GM10248 (cell line): ENCODE measurements at regions of chr17 and their contacts with region 1.

Region 1: GRCh38 chr17:29180034-29180787 is at the start of gene MYO18A:
- DNase-seq: peak; percentile 94
- CTCF ChIP-seq: peak; percentile 89

Region 2: GRCh38 chr17:29155227-29155965 is 24.8 kb before region 1 on chr17:
- CTCF ChIA-PET with region 1: interaction called, 201 read pairs
- POLR2A ChIA-PET with region 1: no interaction called
- DNase-seq: peak; percentile 71
- CTCF ChIP-seq: no peak

Region 3: DNA sequence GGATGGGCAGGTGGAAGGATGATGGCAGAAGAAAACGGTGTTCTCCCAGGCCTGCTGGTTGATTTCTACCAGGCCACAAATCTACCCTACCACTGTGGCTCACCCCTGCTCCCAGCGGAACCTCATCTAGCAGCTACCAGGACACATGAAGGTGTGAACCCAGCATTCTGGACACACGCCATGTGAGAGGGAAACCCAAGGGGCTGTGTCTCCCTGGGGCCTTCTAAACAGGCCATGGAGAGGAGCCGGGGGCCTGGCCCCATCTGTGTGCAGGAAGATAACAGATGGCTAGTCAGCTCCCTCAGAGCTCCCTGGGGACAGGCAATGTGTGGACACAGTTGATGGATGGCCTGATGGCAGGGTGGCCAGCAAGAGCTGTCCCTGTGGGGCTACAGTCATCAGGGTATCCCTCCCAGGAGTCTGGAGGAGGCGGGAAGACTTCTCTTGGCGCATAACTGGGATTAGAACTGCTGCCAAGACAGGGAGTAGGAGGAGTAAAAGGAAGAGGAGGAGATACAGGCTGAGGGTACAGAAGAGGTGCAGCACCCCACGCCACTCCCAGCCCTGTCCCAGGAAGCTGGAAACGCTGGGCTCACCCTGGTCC is 17.4 kb before region 1 on chr17:
- CTCF ChIA-PET with region 1: interaction called, 92 read pairs
- POLR2A ChIA-PET with region 1: no interaction called
- DNase-seq: no peak
- CTCF ChIP-seq: no peak

Region 4: GRCh38 chr17:29195465-29196081 is 15.4 kb after region 1 on chr17:
- CTCF ChIA-PET with region 1: interaction called, 134 read pairs
- POLR2A ChIA-PET with region 1: no interaction called
- DNase-seq: peak; percentile 64
- CTCF ChIP-seq: no peak

Region 5: DNA sequence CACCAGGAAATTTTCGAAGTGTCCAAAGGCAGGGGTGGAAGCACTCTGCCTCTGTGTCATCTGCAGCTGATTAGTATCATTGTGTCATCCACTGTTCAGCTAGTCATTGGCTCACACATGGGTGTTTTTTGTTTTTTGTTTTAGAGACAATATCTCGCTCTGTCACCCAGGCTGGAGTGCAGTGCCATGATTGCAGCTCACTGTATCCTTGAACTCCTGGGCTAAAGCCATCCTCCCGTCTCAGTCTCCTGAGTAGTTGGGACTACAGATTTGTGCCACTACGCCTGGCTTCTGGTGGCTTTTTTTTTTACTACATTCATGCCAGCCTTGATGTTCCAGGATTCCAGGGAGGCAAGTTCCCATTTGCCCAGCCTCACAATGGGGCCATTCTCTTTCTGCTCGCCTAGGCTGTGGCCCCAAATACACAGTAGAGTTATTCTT is 32.5 kb after region 1 on chr17:
- CTCF ChIA-PET with region 1: interaction called, 59 read pairs
- POLR2A ChIA-PET with region 1: no interaction called
- DNase-seq: no peak
- CTCF ChIP-seq: no peak